Activated CD8-positive, alpha-beta T cell treated with anti-CD3 and anti-CD28 coated beads for 36 hours (primary cell): ENCODE measurements at regions of chr5 and their contacts with region 1.

Region 1: DNA sequence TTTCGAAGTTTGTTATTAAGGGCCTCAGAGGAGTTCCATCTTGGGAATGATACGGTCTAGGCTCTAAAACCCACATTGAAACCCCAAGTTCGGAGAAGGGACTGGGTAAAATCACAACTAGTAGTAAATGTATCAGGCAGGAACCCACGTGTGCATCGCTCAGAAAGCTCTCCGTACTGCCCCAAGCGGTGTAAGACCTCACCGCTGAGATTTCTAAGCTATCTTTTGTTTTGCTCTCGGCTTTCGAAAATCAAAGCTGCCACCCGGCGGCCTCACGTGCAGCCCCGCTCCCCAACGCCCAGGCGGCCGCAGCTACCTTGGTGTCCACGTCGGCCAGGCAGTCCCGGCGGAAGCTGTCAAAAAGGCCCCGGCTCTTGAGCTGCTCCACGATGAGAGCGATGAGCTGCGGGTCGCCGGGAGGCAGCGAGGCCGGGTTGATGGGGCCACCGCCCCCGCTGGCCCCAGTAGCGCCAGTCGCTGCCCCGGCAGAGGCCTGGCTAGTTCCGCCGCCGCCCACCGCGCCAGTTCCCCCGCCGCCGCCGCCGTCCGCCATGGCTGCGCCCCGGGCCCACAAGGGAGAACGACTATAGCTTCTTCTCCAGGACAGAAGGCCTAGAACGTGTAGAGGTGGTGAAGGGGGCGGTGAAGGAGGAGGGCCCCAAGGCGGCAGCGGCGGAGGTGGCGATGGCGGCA is 420 bp downstream of the BOD1 start:
- DNase-seq: peak; percentile 84
- ATAC-seq: peak; percentile 60
- H3K4me3 Mint-ChIP-seq: peak overlapping the region; percentile 95
- H3K27ac Mint-ChIP-seq: peak overlapping the region; percentile 94
- H3K4me1 Mint-ChIP-seq: peaks cover 56% of the 10 kb centered on the region
- H3K27me3 Mint-ChIP-seq: no peaks in the 10 kb centered on the region
- CTCF ChIP-seq: peak; percentile 71

Region 2: GRCh38 chr5:173573126-173573960 is 42.7 kb before region 1 on chr5:
- CTCF ChIA-PET with region 1: interaction called, 10 read pairs
- POLR2A ChIA-PET with region 1: no interaction called
- intact Hi-C with region 1: no loop called
- DNase-seq: peak; percentile 67
- ATAC-seq: peak; percentile 82
- H3K4me3 Mint-ChIP-seq: no peak overlapping the region
- H3K27ac Mint-ChIP-seq: no peak overlapping the region
- H3K4me1 Mint-ChIP-seq: peaks cover 3% of the 10 kb centered on the region
- H3K27me3 Mint-ChIP-seq: peaks cover 17% of the 10 kb centered on the region
- CTCF ChIP-seq: peak; percentile 90

Region 3: DNA sequence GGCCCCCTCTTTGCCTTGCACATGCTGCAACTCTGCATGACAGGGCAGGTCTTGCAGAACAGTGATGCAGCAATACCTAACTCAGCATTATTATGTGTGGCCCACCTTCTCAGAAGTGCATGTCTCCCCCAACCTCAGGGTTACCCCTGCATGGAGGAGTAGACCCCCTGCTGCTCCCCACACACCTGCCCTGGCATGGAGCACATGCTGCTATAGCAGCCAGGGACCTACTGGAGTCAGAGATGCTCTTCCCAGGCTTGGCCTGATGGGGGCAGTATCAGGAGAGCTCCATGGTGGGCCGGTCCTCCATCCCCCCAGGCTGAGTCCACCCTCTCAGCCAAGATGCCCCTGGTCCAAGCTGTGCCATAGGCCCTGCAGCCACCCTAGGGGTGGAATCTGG is 13.6 kb after region 1 on chr5:
- CTCF ChIA-PET with region 1: interaction called, 10 read pairs
- POLR2A ChIA-PET with region 1: interaction called, 3 read pairs
- intact Hi-C with region 1: no loop called
- DNase-seq: peak; percentile 31
- ATAC-seq: peak; percentile 73
- H3K4me3 Mint-ChIP-seq: no peak overlapping the region
- H3K27ac Mint-ChIP-seq: no peak overlapping the region
- H3K4me1 Mint-ChIP-seq: no peaks in the 10 kb centered on the region
- H3K27me3 Mint-ChIP-seq: peaks cover 6% of the 10 kb centered on the region
- CTCF ChIP-seq: peak; percentile 52

Region 4: DNA sequence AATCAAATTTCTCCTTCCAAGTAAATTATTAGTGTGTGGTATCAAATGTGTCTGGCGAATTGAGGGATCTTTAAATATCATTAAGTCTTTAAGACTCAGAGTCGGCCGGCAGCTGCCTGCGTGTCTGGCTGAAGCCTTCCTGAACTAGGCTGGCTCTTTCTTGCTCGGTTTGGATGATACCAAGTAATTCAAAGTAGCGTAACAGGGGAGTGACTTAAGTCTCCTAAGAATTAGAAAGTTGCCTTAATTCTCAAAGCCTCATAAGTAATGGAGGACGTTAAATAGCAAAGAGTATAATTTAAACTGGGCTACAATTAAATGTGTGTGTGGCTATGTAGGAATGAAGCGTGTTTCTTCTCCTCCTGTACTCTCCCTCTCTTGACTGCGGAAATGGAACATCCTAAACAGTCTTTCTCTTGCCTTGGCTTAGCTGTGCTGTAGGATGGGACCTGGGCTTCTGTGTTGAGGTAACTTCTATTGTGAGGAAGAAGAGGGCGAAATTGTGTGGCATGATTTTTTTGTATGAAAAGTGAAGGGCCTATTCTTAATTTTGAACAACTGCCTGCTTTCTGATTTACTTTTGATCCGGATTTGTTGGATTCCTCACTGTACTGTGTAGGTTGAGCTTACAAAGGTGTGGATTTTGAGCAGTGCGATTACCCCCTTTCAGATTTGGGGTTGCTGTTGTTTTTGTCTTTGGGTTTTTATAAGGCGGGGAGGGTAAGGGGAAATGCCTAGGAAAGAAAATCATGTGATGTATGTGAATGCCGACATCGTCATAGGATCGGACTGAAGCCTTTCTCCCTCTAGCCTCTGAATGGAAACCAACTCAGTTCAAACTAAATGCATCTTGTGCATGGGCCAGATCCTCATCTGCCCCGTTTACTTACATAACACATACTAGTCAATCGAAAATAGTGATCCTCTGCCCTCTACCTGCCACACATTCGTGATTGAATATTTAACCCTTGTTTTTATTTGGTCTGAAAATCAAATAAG is 302.1 kb after region 1 on chr5:
- CTCF ChIA-PET with region 1: interaction called, 9 read pairs
- POLR2A ChIA-PET with region 1: interaction called, 4 read pairs
- intact Hi-C with region 1: loop called (anchors 1 kb)
- DNase-seq: peak; percentile 71
- ATAC-seq: peak; percentile 95
- H3K4me3 Mint-ChIP-seq: no peak overlapping the region
- H3K27ac Mint-ChIP-seq: no peak overlapping the region
- H3K4me1 Mint-ChIP-seq: peaks cover 14% of the 10 kb centered on the region
- H3K27me3 Mint-ChIP-seq: no peaks in the 10 kb centered on the region
- CTCF ChIP-seq: no peak

Region 5: GRCh38 chr5:173925448-173926071 is 309.5 kb after region 1 on chr5:
- CTCF ChIA-PET with region 1: interaction called, 17 read pairs
- POLR2A ChIA-PET with region 1: interaction called, 4 read pairs
- intact Hi-C with region 1: loop called (anchors 2 kb)
- DNase-seq: peak; percentile 73
- ATAC-seq: no peak
- H3K4me3 Mint-ChIP-seq: no peak overlapping the region
- H3K27ac Mint-ChIP-seq: no peak overlapping the region
- H3K4me1 Mint-ChIP-seq: peaks cover 32% of the 10 kb centered on the region
- H3K27me3 Mint-ChIP-seq: no peaks in the 10 kb centered on the region
- CTCF ChIP-seq: peak; percentile 65

Region 6: GRCh38 chr5:173972925-173973615 is 357.0 kb after region 1 on chr5:
- CTCF ChIA-PET with region 1: interaction called, 93 read pairs
- POLR2A ChIA-PET with region 1: interaction called, 4 read pairs
- intact Hi-C with region 1: loop called (anchors 1 kb)
- DNase-seq: peak; percentile 86
- ATAC-seq: peak; percentile 86
- H3K4me3 Mint-ChIP-seq: peak overlapping the region; percentile 61
- H3K27ac Mint-ChIP-seq: no peak overlapping the region
- H3K4me1 Mint-ChIP-seq: no peaks in the 10 kb centered on the region
- H3K27me3 Mint-ChIP-seq: peaks cover 11% of the 10 kb centered on the region
- CTCF ChIP-seq: peak; percentile 77

Region 7: DNA sequence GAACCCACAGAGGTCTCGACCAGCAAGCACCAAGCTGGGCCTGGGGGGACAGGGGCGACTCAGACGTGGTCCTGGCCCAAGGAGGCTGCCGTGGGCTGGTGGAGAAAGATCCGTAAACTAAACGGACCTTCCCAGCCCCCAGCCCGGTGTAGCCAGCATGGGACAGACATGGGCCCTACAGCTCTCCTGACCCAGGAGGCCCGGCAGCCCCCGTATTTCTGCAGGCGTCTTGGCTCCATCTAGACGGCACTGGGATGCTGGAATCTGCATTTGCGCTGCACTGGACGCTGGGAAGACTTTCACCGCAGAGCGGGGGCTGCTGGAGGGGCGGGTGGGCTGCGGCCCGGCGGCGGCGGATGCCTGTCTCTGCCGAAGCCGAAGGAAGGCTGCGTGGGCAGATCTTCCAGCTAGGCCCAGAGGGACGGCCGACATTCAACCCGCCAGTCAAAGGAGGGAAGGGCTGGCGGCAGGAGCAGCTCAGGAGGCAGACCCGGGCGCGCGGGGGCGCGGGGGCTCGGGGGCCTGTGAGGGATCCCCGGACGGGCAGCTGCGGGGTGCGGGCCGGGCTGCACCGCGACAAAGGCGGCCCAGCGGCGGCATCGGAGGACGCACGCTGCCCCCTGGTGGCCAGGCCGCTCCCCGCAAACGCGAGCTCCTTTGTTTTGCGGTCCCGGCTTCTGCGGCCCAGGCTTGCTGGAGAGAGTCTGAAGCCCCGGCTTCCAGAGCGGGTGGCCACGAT is 695.7 kb after region 1 on chr5:
- CTCF ChIA-PET with region 1: interaction called, 6 read pairs
- POLR2A ChIA-PET with region 1: no interaction called
- intact Hi-C with region 1: loop called (anchors 2 kb)
- DNase-seq: peak; percentile 73
- ATAC-seq: peak; percentile 74
- H3K4me3 Mint-ChIP-seq: no peak overlapping the region
- H3K27ac Mint-ChIP-seq: no peak overlapping the region
- H3K4me1 Mint-ChIP-seq: no peaks in the 10 kb centered on the region
- H3K27me3 Mint-ChIP-seq: peaks cover 23% of the 10 kb centered on the region
- CTCF ChIP-seq: peak; percentile 90